Aorta (tissue), 5 donors: ENCODE measurements at regions of chr14 and their contacts with region 1.

Region 1: DNA sequence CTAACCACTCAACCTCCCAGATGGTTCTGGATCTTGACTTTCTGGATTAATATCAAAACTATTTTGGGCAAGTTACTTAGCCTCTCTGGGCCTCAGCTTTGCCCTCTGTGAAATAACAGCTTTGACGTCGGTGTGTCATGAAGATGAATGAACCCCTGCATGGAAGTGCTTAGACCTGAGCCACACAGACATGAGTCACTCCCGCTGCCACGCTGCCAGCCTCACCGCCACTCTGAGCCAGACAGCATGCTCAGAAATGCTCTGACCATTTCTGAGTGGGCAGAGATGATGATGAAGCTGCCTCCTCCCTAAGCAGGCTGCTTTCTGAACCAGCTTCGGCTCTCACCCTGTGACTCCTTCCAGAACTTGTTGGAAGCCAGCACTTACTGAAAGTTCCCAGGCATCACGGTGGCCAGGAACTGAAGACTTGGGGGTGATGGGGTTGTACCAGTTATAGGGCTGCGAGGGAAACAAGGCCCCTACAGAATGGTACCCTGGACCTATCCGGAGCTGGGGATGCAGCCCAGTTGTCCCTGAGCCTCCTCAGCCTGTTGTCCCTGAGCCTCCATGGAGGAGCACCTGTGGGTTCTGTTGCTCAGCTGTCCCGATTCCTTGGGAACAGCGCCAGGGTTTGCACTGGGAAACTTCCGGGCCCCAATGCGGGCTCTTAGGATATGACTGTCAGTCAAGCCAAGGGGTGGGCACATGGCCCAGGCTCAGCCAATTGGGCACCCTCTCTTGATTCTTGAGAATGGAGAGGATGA is 2.0 kb upstream of the CCDC197 start:
- DNase-seq: peak; percentile 89 to 92
- ATAC-seq: peak; percentile 69
- H3K4me3 ChIP-seq: no peak overlapping the region
- H3K27ac ChIP-seq: peak overlapping the region; percentile 90 to 93
- H3K4me1 ChIP-seq: no peaks in the 10 kb centered on the region
- H3K27me3 ChIP-seq: no peaks in the 10 kb centered on the region

Region 2: DNA sequence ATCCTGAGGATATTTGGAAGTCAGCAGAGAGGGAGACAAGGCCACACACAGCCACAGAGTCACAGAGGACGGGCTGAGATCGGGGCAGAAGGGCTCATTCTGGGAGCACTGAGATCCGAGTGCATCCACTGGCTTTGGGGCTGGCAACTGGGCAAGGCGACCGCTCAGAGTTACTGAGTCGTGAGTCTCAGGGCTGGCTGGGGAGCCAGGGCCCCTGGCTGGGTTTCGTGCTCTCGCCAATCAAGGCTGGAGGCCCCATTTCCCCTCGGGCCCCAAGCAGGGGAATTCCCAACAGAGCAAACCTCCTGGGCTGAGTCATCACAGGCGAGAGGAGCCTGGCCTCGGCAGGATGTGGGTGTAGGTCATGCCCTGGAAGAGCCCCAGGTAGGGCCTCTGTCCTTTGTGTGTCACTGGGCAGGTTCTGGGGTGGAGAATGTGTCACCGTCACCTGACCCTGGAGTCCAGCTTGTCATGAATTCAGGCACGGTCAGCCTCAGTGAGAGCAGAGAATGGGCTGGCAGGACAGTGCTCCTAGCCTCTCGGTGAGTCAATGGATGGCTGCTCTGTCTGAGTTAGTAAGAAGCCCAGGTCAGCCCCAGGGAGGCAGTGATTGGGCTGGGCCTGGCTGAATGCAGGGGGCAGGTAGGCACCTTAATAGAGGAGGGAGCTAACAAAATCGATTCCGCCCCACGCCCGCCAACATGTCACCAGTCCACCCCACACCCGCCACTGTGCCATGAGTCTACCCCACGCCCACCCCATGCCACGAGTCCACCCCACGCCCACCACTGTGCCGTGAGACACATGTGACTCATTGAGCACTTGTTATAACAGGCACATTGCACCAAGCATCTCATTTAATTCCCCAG is 35.6 kb before region 1 on chr14:
- intact Hi-C with region 1: loop called (anchors 5 kb)
- DNase-seq: peak; percentile 84 to 88
- ATAC-seq: peak; percentile 49
- H3K4me3 ChIP-seq: no peak overlapping the region
- H3K27ac ChIP-seq: peak overlapping the region; percentile 6 to 46
- H3K4me1 ChIP-seq: no peaks in the 10 kb centered on the region
- H3K27me3 ChIP-seq: no peaks in the 10 kb centered on the region

Region 3: DNA sequence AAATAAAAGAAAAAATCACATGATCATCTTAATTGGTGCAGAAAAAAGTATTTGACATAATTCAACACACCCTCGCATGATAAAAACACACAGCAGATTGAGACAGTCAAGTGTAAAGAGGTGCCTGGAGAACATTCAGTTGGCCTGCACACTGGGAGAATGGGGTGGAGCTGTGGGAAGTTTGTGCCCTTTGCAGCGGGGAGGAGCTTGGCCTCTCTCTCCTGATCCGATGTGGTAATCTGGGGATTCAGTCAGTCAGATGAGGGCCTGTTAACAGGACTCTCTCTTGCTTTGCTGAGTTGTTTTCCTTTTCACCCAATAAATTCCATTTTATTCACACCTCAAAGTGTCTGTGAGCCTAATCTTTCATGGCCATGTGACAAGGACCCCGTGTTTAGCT is 322.2 kb after region 1 on chr14:
- intact Hi-C with region 1: no loop called
- DNase-seq: peak in 1 of 2 donors; percentile 56
- ATAC-seq: peak; percentile 63
- H3K4me3 ChIP-seq: no peak overlapping the region
- H3K27ac ChIP-seq: no peak overlapping the region
- H3K4me1 ChIP-seq: no peaks in the 10 kb centered on the region
- H3K27me3 ChIP-seq: no peaks in the 10 kb centered on the region